Endothelial cell of umbilical vein (primary cell): ENCODE measurements at regions of chr1 and their contacts with region 1.

Region 1: GRCh38 chr1:6784560-6785317 is 515 bp upstream of the CAMTA1 start:
- DNase-seq: peak; percentile 100
- H3K4me3 ChIP-seq: peak overlapping the region; percentile 44 to 83 (median 79)
- H3K27ac ChIP-seq: peak overlapping the region; percentile 95
- H3K4me1 ChIP-seq: peaks cover 18% of the 10 kb centered on the region
- H3K27me3 ChIP-seq: no peaks in the 10 kb centered on the region
- CTCF ChIP-seq: no peak
- POLR2A ChIP-seq: peak; percentile 66

Region 2: GRCh38 chr1:6602669-6603237 is 182.0 kb before region 1 on chr1 and contains the start of gene KLHL21:
- CTCF ChIA-PET with region 1: no interaction called
- POLR2A ChIA-PET with region 1: no interaction called
- dilution Hi-C with region 1: no loop called
- intact Hi-C with region 1: loop called (anchors 5 kb)
- DNase-seq: peak; percentile 84
- H3K4me3 ChIP-seq: peak within 1 kb of the TSS; percentile 39 to 84 (median 74)
- H3K27ac ChIP-seq: peak within 1 kb of the TSS; percentile 86
- H3K4me1 ChIP-seq: peaks cover 23% of the 10 kb centered on the region
- H3K27me3 ChIP-seq: no peaks in the 10 kb centered on the region
- CTCF ChIP-seq: no peak
- POLR2A ChIP-seq: peak; percentile 99
- total RNA-seq, gene KLHL21: 19.2 and 22.4 TPM in 2 replicates

Region 3: GRCh38 chr1:6727535-6727934 is 57.2 kb before region 1 on chr1:
- CTCF ChIA-PET with region 1: interaction called, 6 read pairs
- POLR2A ChIA-PET with region 1: no interaction called
- dilution Hi-C with region 1: no loop called
- intact Hi-C with region 1: loop called (anchors 1 kb)
- DNase-seq: peak; percentile 71
- H3K4me3 ChIP-seq: no peak overlapping the region
- H3K27ac ChIP-seq: no peak overlapping the region
- H3K4me1 ChIP-seq: no peaks in the 10 kb centered on the region
- H3K27me3 ChIP-seq: peaks cover 2% of the 10 kb centered on the region in 2 experiments
- CTCF ChIP-seq: peak; percentile 81 to 94
- POLR2A ChIP-seq: no peak

Region 4: GRCh38 chr1:6859415-6860343 is 74.9 kb after region 1 on chr1:
- CTCF ChIA-PET with region 1: no interaction called
- POLR2A ChIA-PET with region 1: no interaction called
- dilution Hi-C with region 1: no loop called
- intact Hi-C with region 1: loop called (anchors 1 kb)
- DNase-seq: peak; percentile 95
- H3K4me3 ChIP-seq: peak overlapping the region in 1 of 3 experiments; percentile 5
- H3K27ac ChIP-seq: peak overlapping the region; percentile 89
- H3K4me1 ChIP-seq: peaks cover 20% of the 10 kb centered on the region
- H3K27me3 ChIP-seq: no peaks in the 10 kb centered on the region
- CTCF ChIP-seq: no peak
- POLR2A ChIP-seq: no peak

Region 5: DNA sequence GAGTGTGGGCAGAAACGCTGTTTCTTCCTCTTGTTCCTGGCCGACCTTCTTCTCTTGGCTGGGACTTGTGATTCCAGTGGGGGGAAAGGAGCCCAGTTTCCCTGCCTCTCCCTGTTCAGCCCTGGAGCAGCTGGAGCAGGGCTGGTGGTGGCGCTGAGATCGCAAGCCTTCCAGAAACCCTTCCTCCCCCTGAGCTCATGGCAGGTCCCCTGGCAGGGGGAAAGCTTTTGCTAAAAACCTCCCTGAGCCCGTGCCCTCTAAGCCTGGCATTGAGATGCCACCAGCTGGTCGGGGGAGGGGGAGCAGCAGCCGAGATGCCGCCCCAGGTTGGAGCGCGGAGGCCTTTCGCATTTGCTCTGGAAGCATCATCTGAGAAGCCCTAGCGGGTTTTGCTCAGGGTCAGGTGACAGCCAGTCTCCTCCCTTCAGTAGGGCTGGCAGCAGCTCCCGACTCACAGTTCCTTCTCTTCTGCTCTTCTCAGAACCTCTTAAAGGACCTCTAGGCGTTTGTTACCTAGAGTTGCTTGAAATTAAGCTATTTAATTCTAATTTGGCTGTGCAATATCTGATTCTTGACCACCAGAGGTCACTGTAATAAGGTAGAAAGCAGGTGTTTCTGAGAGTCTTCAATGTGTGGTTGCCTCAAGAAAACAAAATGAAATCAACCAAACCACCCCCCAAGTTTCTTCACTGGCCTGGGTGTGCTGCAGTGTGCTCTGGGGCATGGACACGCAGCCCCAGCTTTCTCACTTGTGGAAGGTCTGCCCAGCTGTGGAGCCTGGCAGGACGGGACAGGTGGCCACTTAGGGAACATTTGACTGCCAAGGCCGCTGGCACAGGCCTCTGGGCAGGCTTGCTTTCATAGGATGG is 257.8 kb after region 1 on chr1:
- CTCF ChIA-PET with region 1: interaction called, 17 read pairs
- POLR2A ChIA-PET with region 1: no interaction called
- dilution Hi-C with region 1: no loop called
- intact Hi-C with region 1: no loop called
- DNase-seq: peak; percentile 31
- H3K4me3 ChIP-seq: no peak overlapping the region
- H3K27ac ChIP-seq: no peak overlapping the region
- H3K4me1 ChIP-seq: no peaks in the 10 kb centered on the region
- H3K27me3 ChIP-seq: no peaks in the 10 kb centered on the region
- CTCF ChIP-seq: peak; percentile 35 to 40
- POLR2A ChIP-seq: no peak

Region 6: GRCh38 chr1:7379445-7379971 is 594.8 kb after region 1 on chr1:
- CTCF ChIA-PET with region 1: no interaction called
- POLR2A ChIA-PET with region 1: no interaction called
- dilution Hi-C with region 1: no loop called
- intact Hi-C with region 1: loop called (anchors 5 kb)
- DNase-seq: peak; percentile 94
- H3K4me3 ChIP-seq: peak overlapping the region in 1 of 3 experiments; percentile 2
- H3K27ac ChIP-seq: peak overlapping the region; percentile 75
- H3K4me1 ChIP-seq: peaks cover 23% of the 10 kb centered on the region
- H3K27me3 ChIP-seq: no peaks in the 10 kb centered on the region
- CTCF ChIP-seq: no peak
- POLR2A ChIP-seq: peak; percentile 54

Region 7: DNA sequence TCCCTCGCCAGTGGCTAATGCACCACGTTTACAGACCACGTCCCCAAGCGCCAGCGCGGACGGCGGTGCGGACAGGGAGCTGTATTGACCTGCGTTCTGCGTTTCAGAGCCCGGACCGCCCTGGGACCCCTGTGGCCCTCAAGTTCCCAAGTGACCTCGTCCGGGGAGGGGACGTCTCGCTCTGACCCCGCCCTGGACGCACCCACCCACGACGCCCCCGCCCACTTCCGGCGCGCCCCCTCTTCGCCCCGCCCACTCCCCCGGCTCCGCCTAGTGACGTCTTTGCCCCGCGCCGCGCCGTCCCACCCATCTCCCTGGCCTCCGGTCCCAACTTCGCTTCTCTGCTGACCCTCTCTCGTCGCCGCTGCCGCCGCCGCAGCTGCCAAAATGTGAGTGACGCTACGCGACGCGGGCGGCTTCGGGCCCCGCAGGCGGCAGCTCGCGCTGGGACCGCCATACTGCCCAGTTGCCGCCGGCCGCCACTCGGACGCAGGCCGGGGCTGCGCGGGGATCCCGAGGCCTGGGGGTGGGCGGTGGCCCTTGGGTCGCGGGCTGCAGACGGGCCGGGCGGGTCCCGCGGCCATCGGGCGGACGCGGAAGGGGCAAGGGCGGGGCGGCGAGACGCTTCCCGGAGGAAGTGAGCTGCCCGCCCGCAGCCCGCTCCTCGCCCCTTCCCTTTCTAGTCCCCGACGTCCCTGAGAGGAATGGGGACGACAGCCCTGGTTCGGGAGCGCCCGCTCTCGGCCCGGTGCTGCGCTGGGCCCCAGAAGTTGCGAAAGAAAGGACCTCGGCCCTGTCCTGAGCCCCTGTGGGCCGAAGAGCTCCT is 986.5 kb after region 1 on chr1 and contains the start of gene VAMP3:
- CTCF ChIA-PET with region 1: no interaction called
- POLR2A ChIA-PET with region 1: no interaction called
- dilution Hi-C with region 1: no loop called
- intact Hi-C with region 1: loop called (anchors 10 kb)
- DNase-seq: peak; percentile 83
- H3K4me3 ChIP-seq: peak within 1 kb of the TSS; percentile 86 to 99 (median 96)
- H3K27ac ChIP-seq: peak within 1 kb of the TSS; percentile 74
- H3K4me1 ChIP-seq: peaks cover 12% of the 10 kb centered on the region
- H3K27me3 ChIP-seq: no peaks in the 10 kb centered on the region
- CTCF ChIP-seq: no peak
- POLR2A ChIP-seq: peak; percentile 70
- total RNA-seq, gene VAMP3: 137 and 148 TPM in 2 replicates